Common myeloid progenitor, CD34-positive (primary cell): ENCODE measurements at regions of chr7 and their contacts with region 1.

Region 1: DNA sequence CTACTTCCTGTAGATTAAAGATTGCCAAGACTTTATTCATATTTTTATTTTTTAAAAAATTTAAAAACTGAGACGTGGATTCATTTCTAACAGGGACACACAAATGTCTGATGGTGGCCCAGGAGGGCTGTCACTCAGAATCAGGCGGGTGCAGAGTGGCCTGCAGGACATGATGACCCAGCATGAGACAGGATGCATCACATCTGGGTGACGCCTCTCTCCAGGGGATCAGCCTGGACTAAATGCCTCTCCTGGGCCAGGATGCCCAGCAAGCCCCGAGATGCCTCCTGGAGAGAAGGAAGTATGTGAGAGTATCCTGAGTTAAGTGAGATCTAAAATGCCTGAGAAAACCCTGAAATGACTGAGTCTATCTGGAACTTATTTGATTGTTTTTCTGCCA is 16.9 kb upstream of the MTURN start:
- DNase-seq: no peak
- H3K4me3 ChIP-seq: no peak overlapping the region
- H3K27ac ChIP-seq: no peak overlapping the region
- H3K4me1 ChIP-seq: no peaks in the 10 kb centered on the region
- H3K27me3 ChIP-seq: no peaks in the 10 kb centered on the region

Region 2: DNA sequence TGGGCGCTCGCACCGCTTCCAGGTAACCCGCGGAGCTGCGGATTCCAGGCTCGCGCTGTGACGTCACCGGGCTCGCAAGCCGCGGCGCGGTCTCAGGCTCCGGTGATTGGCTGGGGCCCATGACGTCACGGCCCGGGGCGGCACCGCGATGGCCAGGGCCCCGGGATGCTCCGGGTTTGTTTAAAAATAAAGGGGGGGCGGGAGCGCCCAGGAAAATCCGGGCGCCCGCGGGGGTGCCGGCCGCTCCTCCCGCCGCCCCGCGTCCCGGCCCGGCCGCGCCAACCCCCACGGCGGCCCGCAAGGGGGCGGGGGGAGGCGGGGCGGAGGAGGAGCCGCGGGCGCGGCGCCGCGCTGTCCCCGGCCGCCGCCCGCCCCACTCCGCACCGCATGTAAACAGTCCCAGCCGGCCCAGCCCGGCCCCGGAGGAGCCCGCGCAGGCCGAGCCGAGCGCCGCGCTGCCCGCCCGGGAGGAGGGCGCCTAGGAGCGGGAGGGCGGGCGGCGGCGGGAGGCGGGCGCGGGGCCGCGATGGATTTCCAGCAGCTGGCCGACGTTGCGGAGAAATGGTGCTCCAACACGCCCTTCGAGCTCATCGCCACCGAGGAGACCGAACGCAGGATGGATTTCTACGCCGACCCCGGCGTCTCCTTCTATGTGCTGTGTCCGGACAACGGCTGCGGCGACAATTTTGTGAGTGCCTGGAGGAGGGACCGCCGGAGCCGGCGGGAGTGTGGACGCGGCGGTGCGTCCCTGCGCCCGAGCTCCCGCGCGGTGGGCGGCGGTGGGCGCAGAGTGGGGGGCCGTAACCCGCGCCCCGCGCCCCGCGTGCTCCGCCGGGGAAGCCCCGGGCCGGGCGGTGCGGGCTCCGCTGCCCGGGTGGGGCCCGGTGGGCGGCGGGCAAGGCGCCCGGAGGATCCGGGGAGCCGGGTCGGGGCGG is 17.0 kb after region 1 on chr7 and contains the start of gene MTURN:
- CTCF ChIA-PET with region 1: interaction called, 10 read pairs
- POLR2A ChIA-PET with region 1: interaction called, 3 read pairs
- DNase-seq: peak; percentile 90 to 92 (median 90)
- H3K4me3 ChIP-seq: peak within 1 kb of the TSS; percentile 74 to 97 (median 88)
- H3K27ac ChIP-seq: peak within 1 kb of the TSS; percentile 91 to 94
- H3K4me1 ChIP-seq: peaks cover 3 to 57% (median 29%) of the 10 kb centered on the region in 4 experiments
- H3K27me3 ChIP-seq: no peaks in the 10 kb centered on the region